HepG2 (cell line): ENCODE measurements at regions of chr3 and their contacts with region 1.

Region 1: GRCh38 chr3:52827866-52828376 is 2.6 kb downstream of the ITIH4 start:
- DNase-seq: peak; percentile 90
- ATAC-seq: peak; percentile 89
- H3K4me3 ChIP-seq: peak overlapping the region in 1 of 3 experiments; percentile 41; a peak in 1 of 6 replicates
- H3K27ac ChIP-seq: no peak overlapping the region
- H3K4me1 ChIP-seq: peaks cover 69% of the 10 kb centered on the region
- H3K27me3 ChIP-seq: no peaks in the 10 kb centered on the region
- CTCF ChIP-seq: peak; percentile 76
- EP300 ChIP-seq: peak in 1 of 2 experiments; percentile 12; a peak in 1 of 4 replicates
- POLR2A ChIP-seq: peak in 1 of 2 experiments; percentile 47; a peak in 1 of 4 replicates
- RAD21 ChIP-seq: peak; percentile 37; the same call in 1 of the 2 replicates

Region 2: DNA sequence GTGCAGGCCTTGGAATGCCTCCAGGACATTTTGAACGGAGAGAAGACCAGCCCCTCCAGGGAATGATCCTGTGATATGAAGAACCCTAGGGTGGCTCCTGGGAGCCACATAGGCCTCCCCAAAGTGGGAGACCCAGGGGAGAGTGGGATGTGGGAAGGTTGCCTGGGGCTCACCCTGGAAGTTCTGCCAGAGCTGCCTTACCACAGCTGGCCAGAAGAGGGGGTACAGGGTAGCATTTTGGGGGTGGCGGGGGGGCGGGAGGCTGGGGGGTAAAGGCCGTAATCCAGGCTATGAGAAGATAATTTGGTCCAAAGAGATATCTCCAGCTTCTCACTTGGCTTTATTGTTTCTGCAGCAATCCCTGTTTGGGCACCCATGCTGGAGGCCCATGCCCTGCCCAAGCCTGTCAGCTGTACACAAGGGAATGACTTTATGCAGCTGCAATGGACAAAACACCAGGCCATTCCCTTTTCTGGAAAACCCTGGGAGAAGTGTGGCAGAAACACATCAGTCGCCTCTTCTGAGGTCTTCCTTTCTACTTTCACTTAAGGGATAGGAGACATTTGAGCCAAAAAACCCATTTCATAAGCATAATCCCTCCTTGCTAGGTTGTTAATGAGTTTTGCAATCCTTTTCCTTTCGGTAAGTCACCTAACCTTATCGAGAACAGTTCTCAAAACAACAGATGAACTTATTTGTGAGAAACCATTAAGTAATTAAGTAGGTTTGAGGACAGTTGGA is 17.9 kb after region 1 on chr3:
- CTCF ChIA-PET with region 1: no interaction called
- POLR2A ChIA-PET with region 1: interaction called, 4 read pairs
- in situ Hi-C with region 1: no loop called
- intact Hi-C with region 1: loop called (anchors 2 kb)
- DNase-seq: no peak
- ATAC-seq: peak; percentile 66
- H3K4me3 ChIP-seq: no peak overlapping the region
- H3K27ac ChIP-seq: no peak overlapping the region
- H3K4me1 ChIP-seq: peaks cover 26% of the 10 kb centered on the region
- H3K27me3 ChIP-seq: no peaks in the 10 kb centered on the region
- CTCF ChIP-seq: peak; percentile 33; the same call in 1 of the 2 replicates
- EP300 ChIP-seq: no peak
- POLR2A ChIP-seq: no peak
- RAD21 ChIP-seq: no peak

Region 3: DNA sequence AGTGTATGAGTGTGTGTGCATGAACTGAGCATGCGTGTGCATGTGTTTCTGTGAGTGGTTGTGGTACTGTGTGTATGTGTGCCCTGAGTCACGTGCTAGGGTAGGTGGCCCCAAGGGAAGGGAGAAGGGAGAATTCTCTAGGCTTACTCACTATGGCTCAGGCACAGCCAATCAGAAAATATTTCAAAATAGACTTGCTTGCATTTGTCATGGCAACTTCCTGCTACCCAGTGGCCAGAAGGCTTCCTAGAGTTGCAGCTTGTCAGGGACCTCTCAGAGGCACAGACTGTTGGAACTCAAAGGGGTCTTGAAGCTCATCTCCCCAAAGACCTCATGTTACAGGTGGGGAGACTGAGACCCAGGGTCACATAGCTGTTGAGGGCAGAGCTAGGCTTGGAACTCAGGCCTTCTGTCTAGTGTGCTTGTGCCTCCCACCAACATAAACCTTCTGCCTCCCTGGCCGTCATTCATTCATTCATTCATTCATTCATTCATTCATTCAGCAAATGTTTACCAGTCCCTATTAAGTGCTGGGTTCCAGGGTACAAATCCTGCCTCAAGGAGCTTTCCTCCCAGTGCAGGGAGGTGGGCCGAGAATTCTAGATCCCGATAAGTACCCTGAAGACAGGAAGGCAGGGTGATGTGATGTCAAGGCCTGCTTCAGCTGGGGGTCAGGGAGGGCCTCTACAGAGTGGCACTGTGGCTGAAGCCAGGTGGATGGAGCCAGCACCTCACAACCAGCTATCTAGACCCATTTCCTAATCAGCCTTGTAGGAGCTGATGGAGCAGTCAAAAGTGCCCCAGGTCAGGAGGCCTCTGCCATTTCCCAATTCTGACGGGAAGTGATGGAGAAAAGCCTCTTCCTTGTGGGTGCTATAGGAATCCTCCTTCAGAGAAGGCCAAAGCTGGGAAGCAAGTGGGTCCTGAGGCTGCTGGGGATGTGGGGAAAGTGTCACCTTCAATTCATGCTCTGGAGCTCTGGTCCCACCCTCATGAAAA is 313.2 kb after region 1 on chr3:
- CTCF ChIA-PET with region 1: no interaction called
- POLR2A ChIA-PET with region 1: no interaction called
- in situ Hi-C with region 1: no loop called
- intact Hi-C with region 1: no loop called
- DNase-seq: no peak
- ATAC-seq: no peak; the same call in 2 of the 3 replicates
- H3K4me3 ChIP-seq: no peak overlapping the region
- H3K27ac ChIP-seq: no peak overlapping the region
- H3K4me1 ChIP-seq: peaks cover 62% of the 10 kb centered on the region
- H3K27me3 ChIP-seq: peaks cover 0 to 35% of the 10 kb centered on the region in 2 experiments; a peak in 3 of 5 replicates
- CTCF ChIP-seq: no peak
- EP300 ChIP-seq: no peak
- POLR2A ChIP-seq: no peak
- RAD21 ChIP-seq: no peak